Calu3 (cell line): ENCODE measurements at regions of chr17 and their contacts with region 1.

Region 1: GRCh38 chr17:39461113-39461925 is at the start of gene CDK12:
- DNase-seq: peak; percentile 100
- H3K4me3 Mint-ChIP-seq: peak within 1 kb of the TSS; percentile 79
- H3K27ac Mint-ChIP-seq: peak within 1 kb of the TSS; percentile 92
- H3K4me1 Mint-ChIP-seq: peaks cover 20% of the 10 kb centered on the region
- H3K27me3 Mint-ChIP-seq: no peaks in the 10 kb centered on the region
- CTCF ChIP-seq: no peak
- total RNA-seq, gene CDK12: 321 and 329 TPM in 2 replicates

Region 2: DNA sequence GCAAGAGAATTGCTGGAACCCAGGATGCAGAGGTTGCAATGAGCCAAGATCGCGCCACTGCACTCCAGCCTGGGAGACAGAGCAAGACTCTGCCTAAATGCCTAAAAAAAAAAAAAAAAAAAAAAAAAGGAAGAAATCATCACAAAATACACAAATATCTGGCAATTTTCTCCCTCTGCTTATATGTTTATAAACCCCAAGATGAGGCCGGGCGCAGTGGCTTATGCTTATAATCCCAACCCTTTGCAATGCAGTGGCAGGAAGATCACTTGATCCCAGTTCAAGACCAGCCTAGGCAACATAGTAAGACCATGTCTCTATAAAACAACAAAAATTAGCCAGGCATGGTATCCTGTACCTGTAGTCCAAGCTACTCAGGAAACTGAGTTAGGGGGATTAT is 31.7 kb before region 1 on chr17:
- CTCF ChIA-PET with region 1: interaction called, 16 read pairs
- intact Hi-C with region 1: no loop called
- DNase-seq: no peak
- H3K4me3 Mint-ChIP-seq: no peak overlapping the region
- H3K27ac Mint-ChIP-seq: no peak overlapping the region
- H3K4me1 Mint-ChIP-seq: no peaks in the 10 kb centered on the region
- H3K27me3 Mint-ChIP-seq: no peaks in the 10 kb centered on the region
- CTCF ChIP-seq: no peak

Region 3: GRCh38 chr17:39450847-39451581 is 10.3 kb before region 1 on chr17 and contains the start of gene MED1:
- CTCF ChIA-PET with region 1: interaction called, 149 read pairs
- intact Hi-C with region 1: loop called (anchors 1 kb)
- DNase-seq: peak; percentile 100
- H3K4me3 Mint-ChIP-seq: peak within 1 kb of the TSS; percentile 94
- H3K27ac Mint-ChIP-seq: peak within 1 kb of the TSS; percentile 98
- H3K4me1 Mint-ChIP-seq: peaks cover 26% of the 10 kb centered on the region
- H3K27me3 Mint-ChIP-seq: no peaks in the 10 kb centered on the region
- CTCF ChIP-seq: no peak
- total RNA-seq, gene MED1: 227 and 230 TPM in 2 replicates

Region 4: GRCh38 chr17:39485555-39485954 is 24.2 kb after region 1 on chr17:
- CTCF ChIA-PET with region 1: interaction called, 30 read pairs
- intact Hi-C with region 1: no loop called
- DNase-seq: peak; percentile 61
- H3K4me3 Mint-ChIP-seq: no peak overlapping the region
- H3K27ac Mint-ChIP-seq: peak overlapping the region; percentile 21
- H3K4me1 Mint-ChIP-seq: no peaks in the 10 kb centered on the region
- H3K27me3 Mint-ChIP-seq: no peaks in the 10 kb centered on the region
- CTCF ChIP-seq: no peak